Heart left ventricle (tissue), 16 donors: ENCODE measurements at regions of chr10 and their contacts with region 1.

Region 1: GRCh38 chr10:29998142-29998808 is 61.1 kb downstream of the JCAD start:
- DNase-seq: peak; percentile 68 to 79 (median 70)
- ATAC-seq: peak in 3 of 4 donors; percentile 56 to 73 (median 72)
- H3K4me3 ChIP-seq: no peak overlapping the region
- H3K27ac ChIP-seq: no peak overlapping the region
- H3K4me1 ChIP-seq: peaks cover 8 to 31% (median 27%) of the 10 kb centered on the region in 12 donors
- H3K27me3 ChIP-seq: peaks cover 0 to 4% (median 0%) of the 10 kb centered on the region in 9 donors
- CTCF ChIP-seq: peak; percentile 97 to 100 (median 98)
- POLR2A ChIP-seq: no peak

Region 2: GRCh38 chr10:29926693-29927048 is 71.6 kb before region 1 on chr10:
- intact Hi-C with region 1: loop called in 1 of 10 experiments (anchors 5 kb)
- DNase-seq: no peak
- ATAC-seq: peak in 1 of 4 donors; percentile 49
- H3K4me3 ChIP-seq: no peak overlapping the region
- H3K27ac ChIP-seq: no peak overlapping the region
- H3K4me1 ChIP-seq: peaks cover 0 to 4% (median 0%) of the 10 kb centered on the region in 12 donors
- H3K27me3 ChIP-seq: no peaks in the 10 kb centered on the region
- CTCF ChIP-seq: peak in 7 of 12 donors; percentile 23 to 47 (median 32)
- POLR2A ChIP-seq: no peak

Region 3: GRCh38 chr10:30186371-30186875 is 188.1 kb after region 1 on chr10:
- intact Hi-C with region 1: loop called in 8 of 10 experiments (anchors 2 to 10 kb)
- DNase-seq: peak in 2 of 5 donors; percentile 30 to 38
- ATAC-seq: peak in 3 of 4 donors; percentile 32 to 67 (median 53)
- H3K4me3 ChIP-seq: peak overlapping the region in 9 of 12 donors; percentile 4 to 42 (median 23)
- H3K27ac ChIP-seq: peak overlapping the region; percentile 62 to 95 (median 80)
- H3K4me1 ChIP-seq: peaks cover 0 to 62% (median 14%) of the 10 kb centered on the region in 12 donors
- H3K27me3 ChIP-seq: no peaks in the 10 kb centered on the region
- CTCF ChIP-seq: peak in 10 of 12 donors; percentile 16 to 55 (median 32)
- POLR2A ChIP-seq: no peak

Region 4: DNA sequence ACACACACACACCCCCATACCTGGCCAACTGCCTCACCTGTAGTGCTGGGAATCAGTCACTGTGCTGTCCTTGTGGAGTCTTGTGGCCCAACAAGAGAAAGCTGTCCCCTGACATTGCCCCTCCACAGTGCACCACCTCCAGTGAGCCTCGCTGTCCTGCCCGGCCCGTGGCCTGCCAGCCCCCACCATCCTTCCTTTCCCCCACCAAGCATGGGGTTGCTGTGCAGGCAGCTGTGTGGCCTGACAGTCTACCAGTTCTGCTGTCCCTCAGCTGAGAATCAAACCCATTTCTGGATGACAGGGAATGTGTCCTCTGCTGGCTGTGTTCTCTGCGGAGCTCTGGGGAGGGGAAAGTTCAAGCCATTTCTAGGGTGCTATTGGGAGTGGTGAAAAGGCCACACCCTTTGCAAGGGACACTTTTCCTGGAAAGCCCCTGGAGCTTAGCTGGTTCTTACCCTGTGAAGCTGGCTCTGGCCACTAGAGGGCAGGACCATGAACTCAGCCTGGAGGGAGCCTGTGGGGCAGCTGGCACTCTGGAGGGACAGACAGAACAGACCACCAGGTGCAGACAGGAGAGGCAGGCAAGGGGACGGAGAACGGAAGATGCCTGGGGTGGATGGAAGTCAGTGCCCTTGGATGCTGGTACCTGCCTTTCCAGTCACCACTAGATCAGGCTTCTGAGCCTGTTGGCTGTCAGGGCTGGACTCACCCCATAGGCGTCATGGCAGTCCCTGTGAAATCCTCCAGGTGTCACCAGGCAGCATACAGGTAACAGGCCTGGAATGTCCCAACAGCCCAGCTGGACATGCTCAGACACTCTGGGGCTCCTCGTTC is 361.3 kb after region 1 on chr10:
- intact Hi-C with region 1: loop called in 1 of 10 experiments (anchors 10 kb)
- DNase-seq: peak in 4 of 5 donors; percentile 44 to 77 (median 54)
- ATAC-seq: peak in 3 of 4 donors; percentile 55 to 66 (median 59)
- H3K4me3 ChIP-seq: no peak overlapping the region
- H3K27ac ChIP-seq: no peak overlapping the region
- H3K4me1 ChIP-seq: no peaks in the 10 kb centered on the region
- H3K27me3 ChIP-seq: no peaks in the 10 kb centered on the region
- CTCF ChIP-seq: peak; percentile 52 to 77 (median 66)
- POLR2A ChIP-seq: peak in 1 of 2 donors; percentile 11

Region 5: DNA sequence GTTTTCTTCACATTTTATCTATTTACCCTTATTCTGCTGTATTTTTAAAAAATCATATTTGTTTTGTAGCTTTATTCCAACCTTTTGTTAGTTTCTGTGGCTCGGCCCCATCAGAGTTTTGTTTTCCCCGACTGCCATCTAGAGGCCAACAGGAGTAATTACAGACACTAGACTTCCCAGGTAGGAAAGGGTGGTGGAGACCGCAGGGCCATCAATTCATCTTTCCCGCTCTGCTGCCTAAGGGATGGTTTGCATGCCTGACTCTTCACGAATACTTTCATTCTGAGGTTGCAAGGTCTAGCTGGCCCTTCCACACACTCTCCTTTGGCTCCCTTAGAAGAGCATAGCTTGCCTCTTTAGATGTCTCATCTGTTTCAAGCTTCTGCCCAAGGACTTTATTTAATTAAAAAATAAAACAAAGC is 593.0 kb after region 1 on chr10:
- intact Hi-C with region 1: loop called in 2 of 10 experiments (anchors 10 kb)
- DNase-seq: peak in 2 of 5 donors; percentile 21 to 30
- ATAC-seq: peak in 2 of 4 donors; percentile 66 to 70
- H3K4me3 ChIP-seq: no peak overlapping the region
- H3K27ac ChIP-seq: no peak overlapping the region
- H3K4me1 ChIP-seq: peaks cover 0 to 26% (median 0%) of the 10 kb centered on the region in 12 donors
- H3K27me3 ChIP-seq: peaks cover 0 to 8% (median 0%) of the 10 kb centered on the region in 9 donors
- CTCF ChIP-seq: peak; percentile 70 to 94 (median 79)
- POLR2A ChIP-seq: no peak